ENCODE measurements at regions of chr2 and their contacts with region 1.

Region 1: GRCh38 chr2:224894356-224894755 is 147.9 kb downstream of the DOCK10 start:
- H3K4me3 Mint-ChIP-seq: peak overlapping the region; percentile 39
- H3K27ac Mint-ChIP-seq: peak overlapping the region; percentile 89
- H3K4me1 Mint-ChIP-seq: peaks cover 76% of the 10 kb centered on the region
- H3K27me3 Mint-ChIP-seq: no peaks in the 10 kb centered on the region

Region 2: DNA sequence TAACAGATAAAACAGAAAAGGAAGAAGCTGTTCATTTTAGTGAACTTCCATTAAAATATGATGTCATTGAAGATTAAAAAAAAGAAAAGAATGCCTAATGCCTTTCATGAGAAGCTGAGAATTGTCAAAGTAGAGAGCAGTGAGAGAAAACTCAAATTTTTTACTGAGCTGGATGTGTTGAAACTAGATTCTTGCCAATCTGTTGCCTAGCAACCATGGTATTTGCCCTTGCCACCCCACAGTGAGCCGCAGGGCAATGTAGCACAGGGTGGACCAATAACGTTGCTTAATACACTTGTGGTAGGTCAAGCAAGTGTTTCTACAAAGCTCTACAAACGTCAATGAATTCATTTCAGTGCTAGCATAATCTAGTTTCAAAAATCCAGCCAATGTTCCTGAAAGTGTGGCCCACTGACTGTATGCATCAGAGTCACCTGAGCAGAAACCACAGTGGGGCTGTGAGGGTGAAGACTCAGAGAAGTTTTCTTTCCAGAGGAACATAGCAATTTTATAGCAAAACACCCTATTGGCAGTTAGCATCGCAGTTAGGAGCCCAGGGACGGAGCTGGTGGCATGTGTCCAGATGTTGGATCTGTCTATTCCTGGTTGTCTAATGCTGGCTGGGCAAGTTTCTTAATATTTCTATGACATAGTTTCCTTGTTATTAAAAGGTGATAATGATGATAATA is 15.7 kb after region 1 on chr2:
- intact Hi-C with region 1: loop called (anchors 2 kb)
- H3K4me3 Mint-ChIP-seq: no peak overlapping the region
- H3K27ac Mint-ChIP-seq: peak overlapping the region; percentile 7
- H3K4me1 Mint-ChIP-seq: peaks cover 32% of the 10 kb centered on the region
- H3K27me3 Mint-ChIP-seq: no peaks in the 10 kb centered on the region

Region 3: GRCh38 chr2:224927646-224928173 is 33.4 kb after region 1 on chr2:
- intact Hi-C with region 1: loop called (anchors 5 kb)
- H3K4me3 Mint-ChIP-seq: peak overlapping the region; percentile 4
- H3K27ac Mint-ChIP-seq: peak overlapping the region; percentile 87
- H3K4me1 Mint-ChIP-seq: peaks cover 92% of the 10 kb centered on the region
- H3K27me3 Mint-ChIP-seq: no peaks in the 10 kb centered on the region

Region 4: DNA sequence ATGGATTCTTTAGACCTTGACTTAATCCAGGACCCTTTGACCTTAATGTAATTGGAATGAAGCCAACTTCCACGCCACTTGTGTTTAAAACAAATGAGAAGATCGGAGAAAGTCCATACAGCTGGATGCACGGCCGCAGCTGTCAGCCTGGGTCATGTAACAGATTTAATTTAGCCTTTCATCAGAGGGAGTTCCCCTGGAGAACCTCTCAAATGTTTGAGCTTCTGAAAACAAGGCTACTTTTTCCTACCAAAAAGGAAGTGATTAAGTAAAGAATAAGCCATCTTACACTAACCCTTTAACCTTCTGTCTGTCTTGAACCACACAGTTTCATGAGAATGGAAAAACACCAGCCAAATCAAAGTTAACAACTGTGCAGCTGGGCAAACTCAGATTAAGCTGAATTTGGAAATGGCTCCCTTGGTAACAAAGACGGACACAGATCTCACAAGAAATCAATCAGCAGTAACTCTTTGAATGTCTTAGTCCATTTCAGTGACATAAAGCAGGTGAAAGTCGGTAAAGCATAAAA is 44.4 kb after region 1 on chr2:
- intact Hi-C with region 1: no loop called
- H3K4me3 Mint-ChIP-seq: no peak overlapping the region
- H3K27ac Mint-ChIP-seq: peak overlapping the region; percentile 48
- H3K4me1 Mint-ChIP-seq: peaks cover 76% of the 10 kb centered on the region
- H3K27me3 Mint-ChIP-seq: no peaks in the 10 kb centered on the region

Measured in dendritic cell treated with granulocyte-macrophage colony-stimulating factor and Interleukin-4, amounts not matched to agents 40 ng/mL and 50 ng/mL, for 4 days (primary cell).